ENCODE measurements at regions of chr10 and their contacts with region 1.

Region 1: DNA sequence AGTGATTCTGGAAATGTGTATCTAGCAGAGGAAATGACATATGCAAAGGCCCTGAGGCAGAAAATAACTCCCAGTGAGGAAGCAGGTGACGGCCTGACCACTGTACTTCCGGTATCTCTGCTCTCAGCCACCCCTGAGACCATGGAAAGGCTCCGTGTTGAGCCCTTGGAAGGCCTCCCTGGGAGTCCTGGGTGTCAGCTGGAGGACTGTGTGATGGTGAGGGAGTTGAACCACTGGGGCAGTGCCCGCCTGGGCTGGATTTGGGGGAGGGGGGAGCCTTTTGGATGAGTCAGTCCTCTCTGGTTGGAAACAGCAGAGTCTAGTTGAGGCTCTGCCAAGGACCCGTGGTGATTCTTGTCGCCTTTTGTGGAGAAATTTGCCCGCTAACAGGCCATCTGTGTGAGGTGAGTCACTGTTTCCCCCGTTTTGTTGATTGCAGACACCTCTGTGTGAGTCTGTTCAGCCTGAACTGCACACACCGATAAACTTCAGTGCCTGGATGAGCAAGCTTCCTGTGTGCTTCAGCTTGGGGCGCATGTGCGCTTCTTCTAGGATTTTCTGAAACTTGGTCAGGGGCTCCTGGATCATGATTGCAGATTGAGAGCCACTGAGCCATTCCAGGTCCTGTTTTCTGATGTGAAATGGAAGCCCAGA is 98.6 kb downstream of the GRK5 start:
- DNase-seq: peak; percentile 95
- H3K4me3 Mint-ChIP-seq: peak overlapping the region; percentile 63
- H3K27ac Mint-ChIP-seq: peak overlapping the region; percentile 100
- H3K4me1 Mint-ChIP-seq: peaks cover 67% of the 10 kb centered on the region
- H3K27me3 Mint-ChIP-seq: no peaks in the 10 kb centered on the region

Region 2: DNA sequence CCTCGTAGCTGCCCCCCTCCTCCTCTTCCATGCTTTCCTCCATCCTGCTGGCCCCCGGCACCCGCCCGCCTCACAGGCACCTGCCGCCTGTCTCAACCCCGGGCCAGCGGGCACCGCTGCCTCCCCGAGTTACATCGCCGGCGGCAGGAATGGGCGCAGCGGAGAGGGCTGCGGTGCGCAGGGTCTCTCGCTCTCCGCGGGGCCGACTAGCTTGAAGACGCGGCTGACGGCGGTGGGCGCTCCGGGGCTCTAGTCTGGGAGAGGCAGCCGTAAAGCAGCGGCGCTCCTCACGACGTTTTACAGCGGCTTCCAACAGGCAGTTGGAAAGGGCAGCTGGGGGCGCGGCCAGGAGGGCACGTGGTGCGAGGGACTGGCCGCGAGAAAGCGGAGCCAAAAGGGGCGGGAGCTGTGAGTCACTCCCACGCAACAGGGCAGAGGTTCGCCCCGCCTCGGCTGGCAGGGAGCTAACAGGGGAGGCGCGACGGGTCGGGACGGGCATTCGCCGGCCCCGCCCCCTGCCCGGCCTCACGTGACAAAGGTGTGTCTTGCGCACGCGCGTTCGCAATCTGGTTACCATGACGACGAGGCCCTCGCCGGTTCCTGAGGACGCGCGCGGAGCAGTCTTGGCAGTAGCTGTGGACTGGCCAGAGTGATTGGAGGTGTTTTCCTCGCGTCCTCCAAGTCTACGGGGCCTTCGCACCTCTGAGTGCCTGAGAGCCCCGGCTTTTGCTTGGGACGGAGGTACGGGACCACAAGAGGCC is 551.1 kb before region 1 on chr10 and contains the start of gene CACUL1:
- CTCF ChIA-PET with region 1: no interaction called
- POLR2A ChIA-PET with region 1: no interaction called
- intact Hi-C with region 1: loop called (anchors 5 kb)
- DNase-seq: peak; percentile 100
- H3K4me3 Mint-ChIP-seq: peak within 1 kb of the TSS; percentile 91
- H3K27ac Mint-ChIP-seq: peak within 1 kb of the TSS; percentile 83
- H3K4me1 Mint-ChIP-seq: peaks cover 34% of the 10 kb centered on the region
- H3K27me3 Mint-ChIP-seq: peaks cover 6% of the 10 kb centered on the region
- total RNA-seq, gene CACUL1: 24.0 to 24.4 TPM

Region 3: DNA sequence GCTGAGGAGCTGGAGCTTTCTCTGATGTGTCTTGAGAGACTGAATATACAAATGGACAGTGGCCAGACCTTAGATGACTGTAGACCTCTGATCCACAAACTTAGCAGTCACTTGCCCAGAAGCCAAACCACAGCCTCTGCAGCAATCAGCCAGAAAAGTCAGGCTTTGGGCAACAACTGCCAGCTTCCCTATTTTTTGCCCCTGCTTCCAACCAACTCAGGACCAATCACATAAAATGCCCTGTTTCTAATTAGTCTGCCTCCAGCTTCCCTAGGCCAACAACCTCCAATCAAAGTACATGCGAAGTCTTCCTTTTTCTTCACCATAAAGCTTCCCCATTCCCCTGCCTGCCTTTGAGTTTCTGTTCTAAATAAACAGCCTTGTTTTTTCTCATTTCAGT is 513.5 kb before region 1 on chr10:
- CTCF ChIA-PET with region 1: no interaction called
- POLR2A ChIA-PET with region 1: no interaction called
- intact Hi-C with region 1: no loop called
- DNase-seq: no peak
- H3K4me3 Mint-ChIP-seq: no peak overlapping the region
- H3K27ac Mint-ChIP-seq: no peak overlapping the region
- H3K4me1 Mint-ChIP-seq: no peaks in the 10 kb centered on the region
- H3K27me3 Mint-ChIP-seq: peaks cover 7% of the 10 kb centered on the region

Region 4: DNA sequence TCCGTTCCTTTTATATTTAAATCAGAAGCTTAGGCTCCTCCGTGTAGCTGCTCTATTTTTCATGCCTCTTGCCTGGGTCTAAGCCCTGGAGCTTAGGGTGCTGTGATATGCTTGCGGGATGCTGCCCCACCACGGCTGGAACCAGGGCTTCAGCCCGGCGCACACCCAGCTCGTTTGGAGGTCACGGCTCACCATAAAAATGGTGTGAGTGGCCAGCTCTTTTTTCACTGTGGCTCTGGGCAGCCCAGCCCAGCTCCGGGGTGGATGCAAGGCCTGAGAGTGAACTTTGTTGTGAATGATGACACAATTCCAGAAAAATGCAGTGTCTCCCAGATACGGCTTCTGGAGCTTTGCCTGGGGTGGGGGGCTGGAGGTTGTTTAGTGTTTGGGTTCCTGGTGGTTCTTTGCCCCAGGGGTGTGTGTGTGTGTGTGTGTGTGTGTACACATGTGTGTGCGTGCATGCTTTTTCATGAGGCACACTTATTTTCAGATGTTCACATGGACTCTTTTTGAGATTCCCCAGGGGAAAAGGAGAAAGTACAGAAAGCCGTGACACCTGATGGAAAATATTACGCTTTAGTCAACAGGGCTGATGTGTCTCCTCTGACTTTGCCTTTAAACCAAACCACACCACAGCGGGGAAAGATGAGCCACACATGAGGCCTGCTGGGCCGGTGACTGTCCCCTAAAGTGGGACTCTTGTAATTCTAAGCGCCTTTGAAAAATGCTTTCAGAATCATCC is 52.4 kb before region 1 on chr10:
- CTCF ChIA-PET with region 1: no interaction called
- POLR2A ChIA-PET with region 1: interaction called, 7 read pairs
- intact Hi-C with region 1: loop called (anchors 1 kb)
- DNase-seq: peak; percentile 79
- H3K4me3 Mint-ChIP-seq: no peak overlapping the region
- H3K27ac Mint-ChIP-seq: peak overlapping the region; percentile 77
- H3K4me1 Mint-ChIP-seq: peaks cover 51% of the 10 kb centered on the region
- H3K27me3 Mint-ChIP-seq: no peaks in the 10 kb centered on the region

Region 5: GRCh38 chr10:119370111-119370741 is 64.2 kb after region 1 on chr10:
- CTCF ChIA-PET with region 1: no interaction called
- POLR2A ChIA-PET with region 1: no interaction called
- intact Hi-C with region 1: loop called (anchors 5 kb)
- DNase-seq: no peak
- H3K4me3 Mint-ChIP-seq: no peak overlapping the region
- H3K27ac Mint-ChIP-seq: peak overlapping the region; percentile 6
- H3K4me1 Mint-ChIP-seq: peaks cover 25% of the 10 kb centered on the region
- H3K27me3 Mint-ChIP-seq: no peaks in the 10 kb centered on the region

Region 6: GRCh38 chr10:119401671-119402395 is 95.8 kb after region 1 on chr10:
- CTCF ChIA-PET with region 1: no interaction called
- POLR2A ChIA-PET with region 1: no interaction called
- intact Hi-C with region 1: no loop called
- DNase-seq: no peak
- H3K4me3 Mint-ChIP-seq: no peak overlapping the region
- H3K27ac Mint-ChIP-seq: no peak overlapping the region
- H3K4me1 Mint-ChIP-seq: peaks cover 8% of the 10 kb centered on the region
- H3K27me3 Mint-ChIP-seq: no peaks in the 10 kb centered on the region

Region 7: GRCh38 chr10:119542988-119543813 is 237.2 kb after region 1 on chr10:
- CTCF ChIA-PET with region 1: no interaction called
- POLR2A ChIA-PET with region 1: no interaction called
- intact Hi-C with region 1: loop called (anchors 5 kb)
- DNase-seq: peak; percentile 79
- H3K4me3 Mint-ChIP-seq: peak overlapping the region; percentile 81
- H3K27ac Mint-ChIP-seq: peak overlapping the region; percentile 87
- H3K4me1 Mint-ChIP-seq: peaks cover 33% of the 10 kb centered on the region
- H3K27me3 Mint-ChIP-seq: no peaks in the 10 kb centered on the region

Region 8: DNA sequence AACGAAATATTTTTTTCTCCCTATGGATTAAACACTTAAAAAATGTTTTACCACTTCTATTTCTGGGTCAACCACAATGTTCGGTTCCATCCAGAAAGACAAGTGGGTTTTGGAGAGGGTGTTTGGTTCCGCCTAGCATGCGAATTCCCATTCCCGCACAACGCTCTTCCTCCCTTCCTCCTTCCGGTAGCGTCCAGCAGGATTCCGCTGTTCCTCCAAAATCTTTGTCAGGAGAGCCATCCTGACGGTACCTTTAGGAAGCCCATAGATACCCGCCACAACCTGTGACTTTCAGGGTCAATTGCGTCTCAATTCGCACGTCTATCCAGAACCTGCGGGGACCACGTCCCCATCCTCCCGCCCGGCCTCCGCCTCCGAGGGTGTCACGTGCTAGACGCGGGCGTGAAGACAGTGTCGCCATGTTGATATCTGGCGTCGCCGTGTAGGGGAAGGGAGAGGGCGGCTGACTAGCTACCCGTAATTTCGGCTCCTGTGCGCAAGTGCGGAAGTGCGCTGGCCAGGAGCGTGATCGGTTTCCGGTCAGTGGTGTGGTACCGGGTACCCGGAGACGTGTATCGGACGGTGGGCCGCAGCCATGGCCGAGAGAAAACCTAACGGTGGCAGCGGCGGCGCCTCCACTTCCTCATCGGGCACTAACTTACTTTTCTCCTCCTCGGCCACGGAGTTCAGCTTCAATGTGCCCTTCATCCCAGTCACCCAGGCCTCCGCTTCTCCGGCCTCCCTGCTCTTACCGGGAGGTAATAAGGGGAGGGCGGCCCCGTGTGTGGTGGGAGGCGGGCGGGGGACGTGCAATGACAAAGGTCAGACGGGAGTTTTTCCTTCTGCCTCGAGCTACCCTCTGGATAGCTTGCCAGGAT is 586.4 kb after region 1 on chr10 and contains the start of gene SEC23IP:
- CTCF ChIA-PET with region 1: no interaction called
- POLR2A ChIA-PET with region 1: no interaction called
- intact Hi-C with region 1: loop called (anchors 2 kb)
- DNase-seq: peak; percentile 96
- H3K4me3 Mint-ChIP-seq: peak within 1 kb of the TSS; percentile 98
- H3K27ac Mint-ChIP-seq: peak within 1 kb of the TSS; percentile 97
- H3K4me1 Mint-ChIP-seq: peaks cover 39% of the 10 kb centered on the region
- H3K27me3 Mint-ChIP-seq: no peaks in the 10 kb centered on the region
- total RNA-seq, gene SEC23IP: 62.4 to 63.6 TPM